ENCODE measurements at regions of chr18 and their contacts with region 1.

Region 1: GRCh38 chr18:13120983-13121441 is 97.5 kb upstream of the LDLRAD4 start:
- DNase-seq: no peak
- H3K4me3 ChIP-seq: no peak overlapping the region
- H3K27ac ChIP-seq: no peak overlapping the region
- H3K4me1 ChIP-seq: no peaks in the 10 kb centered on the region
- H3K27me3 ChIP-seq: no peaks in the 10 kb centered on the region
- CTCF ChIP-seq: no peak
- POLR2A ChIP-seq: no peak

Region 2: DNA sequence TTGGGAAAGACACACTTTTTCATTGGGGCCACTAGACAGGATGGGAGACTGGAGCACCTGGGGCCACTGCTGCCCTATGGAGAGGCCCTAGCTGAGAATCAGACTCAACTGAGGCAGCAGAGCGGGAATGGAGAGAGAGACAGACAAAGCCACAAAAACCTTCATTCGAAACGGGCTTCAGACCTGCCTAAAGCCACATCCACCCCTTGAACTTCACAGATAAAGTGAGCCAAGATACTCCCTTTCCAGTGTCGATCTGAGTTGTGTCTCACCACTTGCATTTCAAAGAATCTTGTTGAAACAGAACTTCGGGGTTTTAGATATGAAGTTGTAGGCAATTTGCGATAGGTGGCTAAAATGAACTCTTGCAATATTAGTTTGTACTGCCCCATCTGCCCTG is 86.3 kb after region 1 on chr18:
- intact Hi-C with region 1: loop called in 1 of 2 experiments (anchors 10 kb)
- DNase-seq: no peak
- H3K4me3 ChIP-seq: no peak overlapping the region
- H3K27ac ChIP-seq: no peak overlapping the region
- H3K4me1 ChIP-seq: no peaks in the 10 kb centered on the region
- H3K27me3 ChIP-seq: peaks cover 3% of the 10 kb centered on the region
- CTCF ChIP-seq: no peak
- POLR2A ChIP-seq: no peak